AG04449 (cell line): ENCODE measurements at regions of chr10 and their contacts with region 1.

Region 1: DNA sequence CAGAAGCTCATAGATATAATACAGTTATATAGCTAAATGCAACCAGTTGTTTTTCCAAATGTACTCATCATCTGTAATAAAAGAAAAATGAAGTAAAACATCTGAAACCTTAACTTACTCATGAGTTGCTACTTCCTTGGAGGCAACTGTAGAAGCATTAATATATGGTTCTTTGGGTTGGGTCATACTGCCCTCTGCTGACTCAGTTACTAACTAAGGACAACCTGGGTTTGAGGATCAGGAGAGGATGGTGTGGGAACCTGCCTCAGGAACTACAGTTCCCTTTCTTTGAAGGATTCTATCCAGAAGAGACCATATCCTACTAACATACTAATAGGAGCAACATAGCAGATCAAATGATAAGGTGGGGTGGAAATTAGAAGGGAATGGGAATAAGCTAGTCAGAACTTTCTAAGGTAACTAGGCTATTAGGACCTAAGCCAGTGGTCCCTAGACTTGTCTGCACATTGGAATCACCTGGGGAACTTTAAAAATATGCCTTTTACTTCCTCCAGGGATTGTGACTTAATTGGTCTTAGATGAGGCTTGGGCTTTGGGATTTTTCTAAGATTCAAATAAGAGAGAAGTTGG is 20.7 kb downstream of the COX15 start:
- DNase-seq: no peak
- H3K4me3 ChIP-seq: no peak overlapping the region
- CTCF ChIP-seq: peak; percentile 50

Region 2: GRCh38 chr10:99612167-99612831 is 98.9 kb before region 1 on chr10:
- CTCF ChIA-PET with region 1: interaction called, 126 read pairs
- POLR2A ChIA-PET with region 1: no interaction called
- DNase-seq: no peak
- H3K4me3 ChIP-seq: no peak overlapping the region
- CTCF ChIP-seq: peak; percentile 76

Region 3: GRCh38 chr10:99630439-99630838 is 80.8 kb before region 1 on chr10:
- CTCF ChIA-PET with region 1: interaction called, 204 read pairs
- POLR2A ChIA-PET with region 1: no interaction called
- DNase-seq: no peak
- H3K4me3 ChIP-seq: no peak overlapping the region
- CTCF ChIP-seq: peak; percentile 58

Region 4: DNA sequence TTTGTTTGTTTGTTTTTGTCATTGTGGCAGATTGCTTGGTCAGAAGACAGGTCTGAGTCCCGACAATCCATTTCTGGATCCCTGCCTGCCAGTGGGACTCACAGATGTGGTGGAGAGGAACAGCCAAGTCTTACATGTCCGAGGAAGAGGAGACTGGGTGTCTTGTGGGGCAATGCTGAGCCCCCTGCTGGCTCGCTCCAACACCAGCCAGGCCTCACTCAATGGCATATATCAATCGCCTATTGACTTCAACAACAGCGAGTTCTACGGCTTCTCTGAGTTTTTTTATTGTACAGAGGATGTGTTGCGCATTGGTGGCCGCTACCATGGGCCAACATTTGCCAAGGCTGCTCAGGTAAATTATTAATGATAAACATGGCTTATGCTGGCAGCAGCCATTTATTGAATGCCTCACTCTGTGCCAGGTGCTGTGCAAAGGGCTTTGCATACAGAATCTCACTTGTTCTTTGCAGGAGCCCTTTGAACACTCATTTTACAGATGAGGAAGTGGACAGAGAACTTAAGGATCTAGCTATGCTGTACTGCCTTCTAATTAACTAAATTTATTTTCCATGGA is 12.6 kb before region 1 on chr10:
- CTCF ChIA-PET with region 1: interaction called, 38 read pairs
- POLR2A ChIA-PET with region 1: interaction called, 4 read pairs
- DNase-seq: no peak
- H3K4me3 ChIP-seq: no peak overlapping the region
- CTCF ChIP-seq: no peak

Region 5: DNA sequence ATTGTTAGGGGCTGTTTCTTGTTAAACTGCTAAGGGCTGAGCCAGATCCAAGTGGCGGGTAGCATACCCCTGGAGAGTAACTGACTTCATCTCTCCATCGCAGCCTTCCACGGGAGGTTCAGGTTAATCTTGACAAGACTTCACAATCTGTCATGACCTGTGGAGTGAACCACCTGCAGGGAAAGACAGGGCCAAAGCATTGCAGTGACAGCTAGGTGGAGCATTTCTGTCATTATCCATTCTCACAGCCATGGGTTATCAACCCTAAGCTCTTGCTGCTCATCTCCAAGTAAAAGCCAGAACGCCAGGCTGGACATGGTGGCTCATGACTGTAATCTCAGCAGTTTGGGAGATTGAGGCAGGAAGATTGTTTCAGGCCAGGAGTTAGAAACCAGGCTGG is 88.4 kb after region 1 on chr10:
- CTCF ChIA-PET with region 1: no interaction called
- POLR2A ChIA-PET with region 1: no interaction called
- DNase-seq: no peak
- H3K4me3 ChIP-seq: no peak overlapping the region
- CTCF ChIP-seq: no peak

Region 6: GRCh38 chr10:99809931-99810615 is 98.8 kb after region 1 on chr10:
- CTCF ChIA-PET with region 1: no interaction called
- POLR2A ChIA-PET with region 1: no interaction called
- DNase-seq: no peak
- H3K4me3 ChIP-seq: no peak overlapping the region
- CTCF ChIP-seq: no peak